ENCODE measurements at regions of chr2 and their contacts with region 1.

Region 1: GRCh38 chr2:127479219-127479825 is 47.0 kb downstream of the IWS1 start:
- DNase-seq: peak; percentile 48
- H3K4me3 Mint-ChIP-seq: no peak overlapping the region
- H3K27ac Mint-ChIP-seq: no peak overlapping the region
- H3K4me1 Mint-ChIP-seq: no peaks in the 10 kb centered on the region
- H3K27me3 Mint-ChIP-seq: no peaks in the 10 kb centered on the region
- CTCF ChIP-seq: peak; percentile 50

Region 2: DNA sequence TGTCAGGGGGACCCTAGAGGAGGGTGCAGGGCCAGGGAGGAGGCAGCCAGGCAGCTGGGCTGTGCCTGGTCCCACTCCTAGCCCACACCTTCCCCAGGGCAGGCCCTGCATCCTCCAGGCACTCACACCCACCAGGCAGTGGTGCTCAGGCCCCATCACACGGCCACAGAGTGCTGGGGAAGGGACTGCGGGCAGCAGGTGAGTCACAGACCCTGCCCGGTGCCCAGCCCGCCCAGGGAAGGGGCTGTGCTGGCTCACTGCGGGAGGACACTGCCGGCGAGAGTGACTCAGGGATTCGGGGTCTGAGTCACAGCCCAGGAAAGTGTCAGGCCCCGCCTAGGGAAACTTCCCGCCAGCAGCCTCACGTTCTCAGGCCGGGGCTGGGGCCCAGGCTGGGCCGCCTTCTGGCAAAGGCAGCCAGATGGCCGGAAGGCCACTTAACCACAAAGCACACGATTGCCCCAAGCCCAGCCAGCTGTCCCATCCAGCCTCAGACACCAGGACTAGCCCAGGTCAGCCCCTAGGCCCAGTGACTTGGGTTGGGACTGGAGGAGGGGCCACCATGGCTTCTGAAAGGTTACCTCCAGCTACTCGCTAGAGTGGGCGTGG is 414.6 kb before region 1 on chr2:
- CTCF ChIA-PET with region 1: no interaction called
- POLR2A ChIA-PET with region 1: no interaction called
- intact Hi-C with region 1: loop called (anchors 10 kb)
- DNase-seq: peak; percentile 98
- H3K4me3 Mint-ChIP-seq: no peak overlapping the region
- H3K27ac Mint-ChIP-seq: peak overlapping the region; percentile 84
- H3K4me1 Mint-ChIP-seq: peaks cover 26% of the 10 kb centered on the region
- H3K27me3 Mint-ChIP-seq: no peaks in the 10 kb centered on the region
- CTCF ChIP-seq: peak; percentile 13

Region 3: DNA sequence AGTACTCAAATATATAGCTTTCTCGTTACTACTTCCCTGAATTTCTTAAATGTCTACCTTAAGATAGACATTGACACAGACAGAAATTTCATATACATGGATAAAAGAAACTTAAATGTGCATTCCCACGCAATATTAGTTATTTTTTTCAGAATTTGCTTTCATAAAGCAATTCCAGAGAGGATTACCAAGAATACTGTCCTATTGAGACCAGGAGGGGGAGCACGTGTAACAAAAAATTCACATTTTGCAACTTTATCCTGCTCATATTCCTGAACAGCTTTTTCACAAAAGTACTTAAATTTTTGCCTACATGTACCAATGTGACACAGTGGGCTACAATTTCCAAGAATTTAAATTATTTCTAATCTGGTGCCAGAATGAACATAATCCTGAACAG is 154.7 kb before region 1 on chr2:
- CTCF ChIA-PET with region 1: interaction called, 46 read pairs
- POLR2A ChIA-PET with region 1: interaction called, 13 read pairs
- intact Hi-C with region 1: loop called (anchors 1 kb)
- DNase-seq: peak; percentile 54
- H3K4me3 Mint-ChIP-seq: no peak overlapping the region
- H3K27ac Mint-ChIP-seq: no peak overlapping the region
- H3K4me1 Mint-ChIP-seq: no peaks in the 10 kb centered on the region
- H3K27me3 Mint-ChIP-seq: no peaks in the 10 kb centered on the region
- CTCF ChIP-seq: peak; percentile 61

Region 4: GRCh38 chr2:127415593-127416505 is 63.5 kb before region 1 on chr2:
- CTCF ChIA-PET with region 1: interaction called, 21 read pairs
- POLR2A ChIA-PET with region 1: interaction called, 7 read pairs
- intact Hi-C with region 1: no loop called
- DNase-seq: peak; percentile 61
- H3K4me3 Mint-ChIP-seq: peak overlapping the region; percentile 65
- H3K27ac Mint-ChIP-seq: peak overlapping the region; percentile 24
- H3K4me1 Mint-ChIP-seq: peaks cover 30% of the 10 kb centered on the region
- H3K27me3 Mint-ChIP-seq: no peaks in the 10 kb centered on the region
- CTCF ChIP-seq: peak; percentile 58

Region 5: DNA sequence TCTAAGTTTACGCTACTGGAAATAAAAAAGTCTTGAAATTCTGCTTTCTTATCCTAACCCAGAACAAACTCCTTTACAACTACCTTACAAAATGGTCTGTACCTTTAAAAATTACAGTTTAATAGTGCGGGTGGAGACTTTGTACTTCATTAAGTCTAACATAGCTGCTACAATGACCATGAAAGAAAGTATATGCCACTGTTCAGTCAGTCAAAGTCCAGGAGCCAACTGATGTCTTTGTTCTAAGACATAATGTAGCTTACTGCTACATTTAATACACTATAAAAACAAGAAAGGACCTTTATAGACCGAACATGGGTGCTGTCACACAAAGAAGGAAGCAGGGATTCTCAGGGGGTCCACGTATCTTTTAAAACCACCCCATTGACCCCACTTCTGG is 11.0 kb after region 1 on chr2:
- CTCF ChIA-PET with region 1: interaction called, 40 read pairs
- POLR2A ChIA-PET with region 1: no interaction called
- intact Hi-C with region 1: no loop called
- DNase-seq: no peak
- H3K4me3 Mint-ChIP-seq: no peak overlapping the region
- H3K27ac Mint-ChIP-seq: no peak overlapping the region
- H3K4me1 Mint-ChIP-seq: peaks cover 7% of the 10 kb centered on the region
- H3K27me3 Mint-ChIP-seq: no peaks in the 10 kb centered on the region
- CTCF ChIP-seq: no peak

Region 6: DNA sequence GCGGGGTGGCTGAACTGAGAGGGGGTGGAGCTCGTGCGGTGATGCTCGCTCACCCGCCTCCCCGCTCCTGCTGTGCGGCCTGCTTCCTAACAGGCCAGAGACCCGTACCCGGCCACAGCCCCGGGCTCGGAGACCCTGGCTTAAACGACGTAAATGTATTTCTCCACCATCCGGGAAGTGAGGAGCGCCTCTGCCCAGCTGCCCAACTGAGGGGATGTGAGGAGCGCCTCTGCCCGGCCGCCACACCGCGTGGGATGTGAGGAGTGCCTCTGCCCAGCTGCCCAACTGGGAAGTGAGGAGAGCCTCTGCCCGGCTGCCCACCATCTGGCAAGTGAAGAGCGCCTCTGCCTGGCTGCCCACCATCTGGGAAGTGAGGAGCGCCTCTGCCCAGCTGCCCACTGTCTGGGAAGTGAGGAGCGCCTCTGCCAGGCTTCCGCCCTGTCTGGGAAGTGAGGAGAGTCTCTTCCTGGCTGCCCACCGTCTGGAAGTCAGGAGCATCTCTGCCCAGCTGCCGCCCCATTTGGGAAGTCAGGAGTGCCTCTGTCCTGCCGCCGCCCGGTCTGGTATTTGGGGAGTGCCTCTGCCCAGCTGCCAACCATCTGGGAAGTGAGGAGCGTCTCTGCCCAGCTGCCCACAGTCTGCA is 728.8 kb after region 1 on chr2:
- CTCF ChIA-PET with region 1: no interaction called
- POLR2A ChIA-PET with region 1: no interaction called
- intact Hi-C with region 1: no loop called
- DNase-seq: no peak
- H3K4me3 Mint-ChIP-seq: no peak overlapping the region
- H3K27ac Mint-ChIP-seq: no peak overlapping the region
- H3K4me1 Mint-ChIP-seq: no peaks in the 10 kb centered on the region
- H3K27me3 Mint-ChIP-seq: no peaks in the 10 kb centered on the region
- CTCF ChIP-seq: no peak

Region 7: GRCh38 chr2:128269063-128269993 is 790.0 kb after region 1 on chr2:
- CTCF ChIA-PET with region 1: no interaction called
- POLR2A ChIA-PET with region 1: no interaction called
- intact Hi-C with region 1: no loop called
- DNase-seq: no peak
- H3K4me3 Mint-ChIP-seq: no peak overlapping the region
- H3K27ac Mint-ChIP-seq: no peak overlapping the region
- H3K4me1 Mint-ChIP-seq: no peaks in the 10 kb centered on the region
- H3K27me3 Mint-ChIP-seq: no peaks in the 10 kb centered on the region
- CTCF ChIP-seq: no peak